Vagina (tissue), 2 donors: ENCODE measurements at regions of chr19 and their contacts with region 1.

Region 1: GRCh38 chr19:3108775-3109174 is 14.6 kb downstream of the GNA11 start:
- DNase-seq: no peak
- H3K4me3 ChIP-seq: no peak overlapping the region
- H3K27ac ChIP-seq: no peak overlapping the region
- H3K4me1 ChIP-seq: peaks cover 46% of the 10 kb centered on the region
- H3K27me3 ChIP-seq: no peaks in the 10 kb centered on the region
- CTCF ChIP-seq: peak in 2 of 3 experiments; percentile 59 to 67
- POLR2A ChIP-seq: no peak

Region 2: DNA sequence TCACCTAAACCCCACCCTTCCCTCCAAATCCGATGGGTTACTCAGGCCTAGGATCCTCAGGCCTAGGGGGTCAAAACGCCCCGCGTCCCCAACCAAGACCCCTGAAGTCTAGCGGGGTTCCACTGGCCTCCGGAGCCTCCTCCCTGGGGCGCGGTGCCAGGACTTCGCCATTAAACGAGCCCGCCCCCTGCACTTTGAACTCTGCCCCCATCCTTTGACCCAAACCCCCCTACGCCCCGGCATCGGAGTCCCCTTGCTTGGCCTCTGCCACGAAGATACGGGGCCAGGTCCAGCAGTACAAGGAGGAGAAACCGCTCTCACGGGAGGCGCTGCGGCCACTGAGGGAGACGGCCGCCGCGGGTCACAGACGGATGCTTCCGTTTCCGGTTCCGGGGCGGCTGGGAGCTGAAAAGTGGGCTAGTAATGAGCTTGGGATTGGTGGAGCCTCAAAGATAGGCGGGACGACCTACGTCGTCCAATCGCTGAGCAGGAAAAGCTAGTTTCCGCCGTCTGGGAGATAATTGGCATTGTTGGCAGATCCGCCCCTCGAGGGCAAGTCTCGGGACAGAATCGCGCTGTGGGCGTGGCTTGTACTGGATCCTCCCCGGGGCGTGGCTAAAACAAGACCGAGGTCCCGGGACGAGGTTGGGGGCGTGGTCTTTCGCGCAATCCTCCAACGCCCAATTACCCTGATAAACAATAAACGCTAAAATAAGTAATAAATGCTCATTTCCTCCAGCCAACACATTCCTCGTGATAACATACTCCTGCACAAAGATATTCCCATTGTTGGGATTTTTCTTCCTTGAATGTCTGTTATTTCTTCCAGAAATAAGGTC is 158.3 kb before region 1 on chr19:
- intact Hi-C with region 1: loop called (anchors 10 kb)
- DNase-seq: peak; percentile 98 to 100
- H3K4me3 ChIP-seq: peak overlapping the region; percentile 51 to 73
- H3K27ac ChIP-seq: peak overlapping the region; percentile 95
- H3K4me1 ChIP-seq: peaks cover 15% of the 10 kb centered on the region
- H3K27me3 ChIP-seq: no peaks in the 10 kb centered on the region
- CTCF ChIP-seq: no peak
- POLR2A ChIP-seq: peak in 1 of 2 donors; percentile 89

Region 3: GRCh38 chr19:3065675-3066357 is 43.0 kb before region 1 on chr19:
- intact Hi-C with region 1: loop called (anchors 5 kb)
- DNase-seq: no peak
- H3K4me3 ChIP-seq: no peak overlapping the region
- H3K27ac ChIP-seq: no peak overlapping the region
- H3K4me1 ChIP-seq: peaks cover 13% of the 10 kb centered on the region
- H3K27me3 ChIP-seq: no peaks in the 10 kb centered on the region
- CTCF ChIP-seq: no peak
- POLR2A ChIP-seq: no peak